Activated naive CD4-positive, alpha-beta T cell treated with anti-CD3 and anti-CD28 coated beads for 36 hours (primary cell): ENCODE measurements at regions of chr3 and their contacts with region 1.

Region 1: GRCh38 chr3:45915518-45916231 is 27.6 kb upstream of the CXCR6 start:
- DNase-seq: peak; percentile 83
- H3K4me3 Mint-ChIP-seq: no peak overlapping the region
- H3K27ac Mint-ChIP-seq: no peak overlapping the region
- H3K4me1 Mint-ChIP-seq: peaks cover 24% of the 10 kb centered on the region
- H3K27me3 Mint-ChIP-seq: peaks cover 7% of the 10 kb centered on the region

Region 2: GRCh38 chr3:45593708-45594609 is 321.7 kb before region 1 on chr3:
- CTCF ChIA-PET with region 1: no interaction called
- intact Hi-C with region 1: loop called (anchors 10 kb)
- DNase-seq: peak; percentile 61
- H3K4me3 Mint-ChIP-seq: peak overlapping the region; percentile 80
- H3K27ac Mint-ChIP-seq: peak overlapping the region; percentile 84
- H3K4me1 Mint-ChIP-seq: peaks cover 48% of the 10 kb centered on the region
- H3K27me3 Mint-ChIP-seq: no peaks in the 10 kb centered on the region

Region 3: GRCh38 chr3:45688882-45689756 is 226.6 kb before region 1 on chr3 and contains the start of gene SACM1L:
- CTCF ChIA-PET with region 1: no interaction called
- intact Hi-C with region 1: no loop called
- DNase-seq: peak; percentile 98
- H3K4me3 Mint-ChIP-seq: peak within 1 kb of the TSS; percentile 83
- H3K27ac Mint-ChIP-seq: peak within 1 kb of the TSS; percentile 90
- H3K4me1 Mint-ChIP-seq: peaks cover 44% of the 10 kb centered on the region
- H3K27me3 Mint-ChIP-seq: peaks cover 3% of the 10 kb centered on the region
- total RNA-seq, gene SACM1L: 44.9 to 51.0 TPM

Region 4: DNA sequence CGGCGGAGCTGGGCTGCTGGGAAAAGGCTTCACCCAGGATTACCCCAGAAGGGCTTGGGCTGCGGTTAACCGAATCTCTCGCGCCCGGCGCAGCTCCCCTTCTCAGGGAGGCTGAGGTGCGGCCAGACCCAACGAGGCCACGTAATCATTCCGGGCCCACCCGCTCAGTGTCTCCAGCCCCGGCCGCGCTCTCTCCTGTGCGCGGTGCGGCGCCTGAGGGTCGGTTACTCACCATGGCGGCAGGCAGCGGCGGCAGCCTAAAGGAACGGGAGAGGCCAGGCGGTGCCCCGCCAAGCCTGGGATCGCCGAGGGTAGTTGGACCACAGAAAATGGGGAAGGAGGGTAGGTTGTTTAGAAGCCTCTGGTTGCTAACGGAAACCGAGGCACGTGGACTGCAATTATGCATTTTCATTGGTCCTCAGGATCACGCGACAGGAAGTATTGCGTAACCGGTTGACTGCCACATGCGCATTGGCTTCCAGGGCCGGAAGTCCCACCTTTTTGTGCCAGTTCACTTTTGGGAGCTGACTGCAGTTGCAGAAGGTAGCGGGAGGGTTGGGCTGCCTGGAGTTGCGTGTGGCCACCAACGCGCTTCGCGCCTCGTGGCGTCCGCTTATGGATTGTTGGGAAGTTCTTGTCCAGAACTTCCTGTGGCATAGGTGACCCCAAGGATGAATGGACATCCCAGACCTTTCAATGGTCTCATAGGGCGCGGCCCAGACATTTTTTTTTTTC is 73.8 kb before region 1 on chr3 and contains the start of gene LZTFL1:
- CTCF ChIA-PET with region 1: no interaction called
- intact Hi-C with region 1: loop called (anchors 5 kb)
- DNase-seq: peak; percentile 96
- H3K4me3 Mint-ChIP-seq: peak within 1 kb of the TSS; percentile 90
- H3K27ac Mint-ChIP-seq: peak within 1 kb of the TSS; percentile 27
- H3K4me1 Mint-ChIP-seq: peaks cover 12% of the 10 kb centered on the region
- H3K27me3 Mint-ChIP-seq: no peaks in the 10 kb centered on the region
- total RNA-seq, gene LZTFL1: 3.6 to 4.1 TPM

Region 5: DNA sequence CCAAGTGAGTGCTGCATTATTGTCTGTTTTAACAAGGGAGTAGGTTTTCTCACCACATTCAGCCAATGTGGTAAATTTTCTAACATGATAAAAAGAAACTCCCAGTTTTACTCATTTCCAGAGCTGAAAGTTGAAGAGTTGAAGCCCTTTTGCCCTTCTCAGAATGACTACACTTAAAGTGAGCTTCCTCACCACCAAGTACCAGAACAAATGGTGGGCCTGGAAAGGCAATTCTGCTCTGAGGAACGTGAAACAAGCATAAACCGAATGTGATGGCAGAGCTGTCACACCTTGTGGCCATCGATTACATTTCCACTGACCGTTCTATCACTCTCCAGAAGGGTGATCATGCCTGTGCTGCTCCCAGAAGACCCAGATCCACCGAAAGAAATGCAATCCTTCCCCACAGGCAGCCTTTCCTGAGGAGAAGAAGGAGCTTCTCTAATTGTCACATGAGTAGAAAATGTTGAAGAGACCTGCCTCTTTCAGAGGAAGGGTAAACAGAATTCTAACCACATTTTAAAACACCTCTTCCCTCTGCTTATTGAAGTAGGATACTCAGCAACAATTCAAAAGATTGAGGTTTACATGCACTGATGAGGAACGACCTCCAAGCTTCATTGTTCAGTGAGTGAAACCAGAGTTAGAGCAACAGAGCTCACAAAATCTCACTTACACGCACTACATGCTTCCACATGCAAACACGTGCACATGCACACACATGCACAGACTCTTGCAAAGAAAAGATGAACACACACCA is 50.7 kb before region 1 on chr3:
- CTCF ChIA-PET with region 1: no interaction called
- intact Hi-C with region 1: loop called (anchors 1 kb)
- DNase-seq: peak; percentile 48
- H3K4me3 Mint-ChIP-seq: no peak overlapping the region
- H3K27ac Mint-ChIP-seq: no peak overlapping the region
- H3K4me1 Mint-ChIP-seq: peaks cover 44% of the 10 kb centered on the region
- H3K27me3 Mint-ChIP-seq: peaks cover 53% of the 10 kb centered on the region

Region 6: DNA sequence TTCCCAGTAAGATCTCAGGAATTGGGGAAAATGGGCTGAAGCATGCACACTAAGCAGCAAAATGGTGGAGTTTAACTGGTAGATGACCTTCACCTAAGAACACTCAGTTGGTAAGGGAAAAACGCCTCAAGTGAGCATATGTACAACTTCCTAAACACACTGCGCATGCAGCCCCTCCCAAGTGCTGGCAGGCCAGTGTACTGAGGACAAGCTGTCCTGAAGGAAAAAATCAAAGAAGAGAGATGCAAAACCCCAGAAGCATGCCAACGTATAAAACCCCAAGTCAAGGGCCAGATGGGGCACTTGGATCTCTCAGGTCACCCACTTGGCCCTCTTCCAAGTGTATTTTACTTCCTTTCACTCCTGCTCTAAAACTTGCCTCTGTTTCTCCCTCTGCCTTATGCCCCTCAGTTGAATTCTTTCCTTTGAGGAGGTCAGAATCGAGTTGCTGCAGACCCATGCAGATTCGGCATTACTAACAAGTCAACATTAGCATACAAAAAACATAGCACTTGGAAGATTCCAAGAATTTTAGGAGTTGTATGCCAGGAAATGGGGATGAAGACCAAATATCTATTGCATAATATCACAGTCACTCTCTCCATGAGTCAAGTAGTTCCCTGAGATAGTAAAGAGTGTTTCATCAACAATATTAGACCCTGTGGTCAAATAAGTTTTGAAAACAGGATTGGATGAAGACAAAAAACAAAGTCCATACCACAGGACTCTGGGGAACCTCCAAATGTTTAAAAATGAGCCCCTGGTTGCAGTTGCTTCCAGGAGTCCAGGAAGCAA is 90.8 kb after region 1 on chr3:
- CTCF ChIA-PET with region 1: no interaction called
- intact Hi-C with region 1: no loop called
- DNase-seq: no peak
- H3K4me3 Mint-ChIP-seq: no peak overlapping the region
- H3K27ac Mint-ChIP-seq: no peak overlapping the region
- H3K4me1 Mint-ChIP-seq: peaks cover 6% of the 10 kb centered on the region
- H3K27me3 Mint-ChIP-seq: no peaks in the 10 kb centered on the region